Activated T-helper 1 cell treated with anti-CD3 and anti-CD28 coated beads, Interleukin-12 subunit alpha, Interleukin-12 subunit beta, Interleukin-2, Interleukin-4 antibody, amounts not matched to agents 30 ng/mL and 10 ng/mL and 1 ng/mL, durations not matched to agents 14 hours and 24 hours and 36 hours (primary cell): ENCODE measurements at regions of chr17 and their contacts with region 1.

Region 1: DNA sequence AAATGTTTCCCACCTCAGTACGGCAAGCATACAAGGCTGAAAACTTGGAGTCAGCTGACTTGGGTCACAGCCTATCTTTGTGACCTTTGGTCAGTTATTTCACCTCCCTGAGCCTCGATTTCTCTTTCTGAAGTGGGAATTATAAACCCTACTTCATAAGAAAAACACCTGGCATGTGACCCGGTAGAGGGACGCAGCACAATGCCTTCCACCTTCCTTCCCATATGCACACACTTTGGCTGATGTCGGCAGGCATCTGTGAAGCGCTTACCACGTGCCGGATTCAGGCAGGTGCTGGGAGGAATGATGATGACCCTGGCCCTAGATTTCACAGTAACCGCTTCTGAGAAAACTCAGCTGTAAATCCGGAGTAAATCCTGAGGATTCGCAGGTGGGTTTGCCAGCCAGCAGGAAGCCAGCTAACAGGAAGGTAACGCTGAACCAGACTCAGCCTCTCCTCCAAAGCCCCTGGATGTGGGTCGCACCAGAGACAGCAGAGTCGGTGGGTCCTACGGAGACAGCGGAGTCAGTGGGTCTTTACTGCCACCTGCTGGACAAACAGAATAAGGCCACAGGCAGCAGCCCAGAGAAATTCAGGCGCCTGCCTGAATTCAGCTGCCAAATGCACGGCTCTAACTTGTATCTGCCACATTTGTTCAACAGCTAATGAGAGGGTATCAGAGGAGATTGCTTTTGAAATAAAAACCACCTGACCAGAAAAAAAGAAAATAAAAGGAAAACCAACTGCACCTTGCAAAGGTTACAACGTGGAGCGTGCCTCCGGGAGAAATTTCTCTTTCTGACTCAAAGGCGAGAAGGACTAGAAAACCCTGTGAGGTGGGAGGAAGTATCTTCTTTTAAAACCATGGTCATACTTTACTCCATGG is 16.6 kb downstream of the COPRS start:
- DNase-seq: peak; percentile 39
- H3K4me3 Mint-ChIP-seq: no peak overlapping the region
- H3K27ac Mint-ChIP-seq: no peak overlapping the region
- H3K4me1 Mint-ChIP-seq: no peaks in the 10 kb centered on the region
- H3K27me3 Mint-ChIP-seq: peaks cover 13% of the 10 kb centered on the region

Region 2: DNA sequence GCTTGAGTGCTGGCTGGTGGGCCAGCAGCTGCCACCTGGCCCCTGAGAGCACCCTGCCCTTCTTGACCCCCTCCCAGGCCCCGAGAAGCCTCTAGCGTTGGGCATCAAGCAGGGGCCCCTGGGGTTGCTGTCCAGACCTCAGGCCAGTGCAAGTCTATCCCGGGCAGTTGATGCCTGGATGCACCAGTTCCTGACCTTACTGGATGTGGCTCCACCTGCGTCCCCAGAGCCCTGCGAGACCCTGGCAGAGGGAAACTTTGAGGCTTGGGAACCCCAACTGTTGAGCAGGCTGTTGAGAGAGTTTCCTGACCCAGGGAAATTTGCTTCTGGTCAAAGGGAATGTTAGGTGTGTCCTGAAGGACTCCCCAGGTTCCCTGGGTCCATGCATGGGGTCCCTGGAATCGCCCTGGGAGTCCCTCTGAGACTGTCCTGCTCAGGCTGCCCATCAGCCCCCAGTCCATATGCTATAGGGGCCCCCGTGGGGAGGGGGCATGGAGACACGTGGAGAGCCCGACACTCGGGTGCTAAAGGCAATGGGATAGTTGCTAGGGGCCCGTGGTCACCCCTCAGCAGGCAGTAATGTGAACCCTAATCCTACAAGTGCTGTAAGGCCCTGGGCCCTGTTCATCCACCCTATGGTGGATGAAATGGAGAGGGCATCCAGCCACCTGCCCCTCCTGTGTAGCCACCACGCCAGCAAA is 404.6 kb before region 1 on chr17:
- intact Hi-C with region 1: loop called (anchors 1 kb)
- DNase-seq: no peak
- H3K4me3 Mint-ChIP-seq: no peak overlapping the region
- H3K27ac Mint-ChIP-seq: no peak overlapping the region
- H3K4me1 Mint-ChIP-seq: peaks cover 6% of the 10 kb centered on the region
- H3K27me3 Mint-ChIP-seq: peaks cover 21% of the 10 kb centered on the region

Region 3: DNA sequence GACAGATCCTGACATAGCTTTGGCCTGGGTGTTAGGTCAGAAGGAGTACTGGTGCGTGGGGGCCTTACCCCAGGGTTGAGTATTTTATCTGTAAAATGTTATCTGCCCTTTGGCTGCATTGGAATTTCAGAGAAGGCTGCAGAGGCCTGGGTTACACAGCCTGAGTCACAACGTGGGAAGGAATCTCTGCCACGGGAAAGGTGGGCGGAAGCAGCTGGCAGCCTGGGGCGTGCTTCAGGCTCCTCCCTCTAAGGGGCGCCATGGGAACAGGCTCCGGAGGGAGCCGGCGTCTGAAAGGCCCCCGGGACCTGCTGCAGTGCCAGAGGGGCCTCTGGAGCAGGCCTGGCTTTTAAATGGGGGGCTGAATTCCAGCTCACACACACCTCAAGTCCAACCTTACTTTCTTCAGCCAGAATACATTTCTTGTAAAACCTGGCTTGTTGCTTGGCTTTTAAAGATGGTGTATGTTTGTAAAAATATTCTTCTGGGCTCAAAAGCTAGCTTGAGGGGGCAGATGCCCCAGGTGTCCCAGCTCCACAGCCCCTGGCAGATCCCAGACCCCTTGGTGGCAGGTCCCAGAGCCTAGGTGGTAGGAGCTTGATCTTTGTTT is 308.8 kb before region 1 on chr17:
- intact Hi-C with region 1: loop called (anchors 5 kb)
- DNase-seq: no peak
- H3K4me3 Mint-ChIP-seq: no peak overlapping the region
- H3K27ac Mint-ChIP-seq: no peak overlapping the region
- H3K4me1 Mint-ChIP-seq: peaks cover 16% of the 10 kb centered on the region
- H3K27me3 Mint-ChIP-seq: no peaks in the 10 kb centered on the region

Region 4: DNA sequence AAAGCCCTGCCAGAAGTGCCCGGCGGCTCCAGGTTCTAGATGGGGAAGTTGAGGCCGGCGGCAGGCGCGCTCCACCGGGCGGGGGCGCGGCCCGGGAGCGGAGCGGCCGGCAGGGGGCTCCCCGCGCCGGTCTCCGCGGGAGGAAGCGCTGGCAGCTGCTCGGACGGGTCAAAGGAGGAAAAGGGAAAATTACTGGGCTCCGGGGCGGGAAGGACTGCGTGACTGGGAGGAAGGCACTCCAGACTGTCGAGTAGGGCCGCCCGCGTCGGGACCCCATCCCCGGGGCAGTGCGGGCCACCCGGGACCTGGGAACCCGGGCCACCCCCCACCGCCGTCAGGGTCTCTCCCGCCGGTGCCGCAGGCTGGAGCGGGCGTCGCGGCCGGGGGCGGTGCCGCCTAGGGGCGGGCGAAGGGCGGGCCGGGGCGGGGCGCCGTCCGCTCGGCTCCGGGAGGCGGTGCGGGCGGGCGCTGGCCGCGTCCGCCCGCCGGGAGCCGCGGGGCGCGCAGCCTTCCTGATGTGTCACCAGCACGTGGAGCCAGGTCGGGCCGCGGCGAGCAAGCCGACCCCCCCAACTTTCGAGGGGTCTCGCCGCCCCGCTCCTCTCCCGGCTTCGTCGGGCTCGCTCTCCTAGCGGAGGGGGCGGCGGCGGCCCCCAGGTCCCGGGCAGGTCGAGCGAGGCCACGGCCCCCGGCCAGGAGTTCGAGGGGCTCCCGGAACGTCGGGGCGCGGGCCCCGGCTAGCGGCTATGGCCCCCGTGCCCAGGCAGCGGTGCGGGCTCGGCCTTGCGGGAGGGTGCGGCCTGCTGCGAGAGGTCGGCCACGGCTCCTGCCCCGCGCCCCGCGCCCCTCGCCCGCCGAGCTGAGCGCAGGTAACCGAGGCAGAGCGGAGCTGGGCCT is 283.4 kb before region 1 on chr17:
- intact Hi-C with region 1: loop called (anchors 1 kb)
- DNase-seq: peak; percentile 31
- H3K4me3 Mint-ChIP-seq: peak overlapping the region; percentile 76
- H3K27ac Mint-ChIP-seq: peak overlapping the region; percentile 18
- H3K4me1 Mint-ChIP-seq: peaks cover 13% of the 10 kb centered on the region
- H3K27me3 Mint-ChIP-seq: peaks cover 19% of the 10 kb centered on the region